Caco-2 (cell line): ENCODE measurements at regions of chr7 and their contacts with region 1.

Region 1: GRCh38 chr7:28530175-28530802 is 118.0 kb downstream of the CREB5 start:
- DNase-seq: peak in 1 of 2 experiments; percentile 69
- H3K4me3 ChIP-seq: no peak overlapping the region
- H3K4me3 Mint-ChIP-seq: peak overlapping the region; percentile 27
- H3K27ac Mint-ChIP-seq: no peak overlapping the region
- H3K4me1 ChIP-seq: peaks cover 19% of the 10 kb centered on the region
- H3K4me1 Mint-ChIP-seq: peaks cover 22% of the 10 kb centered on the region
- H3K27me3 ChIP-seq: no peaks in the 10 kb centered on the region
- H3K27me3 Mint-ChIP-seq: no peaks in the 10 kb centered on the region
- CTCF ChIP-seq: no peak

Region 2: GRCh38 chr7:28378574-28379149 is 151.6 kb before region 1 on chr7:
- CTCF ChIA-PET with region 1: no interaction called
- POLR2A ChIA-PET with region 1: no interaction called
- intact Hi-C with region 1: no loop called
- DNase-seq: no peak
- H3K4me3 ChIP-seq: no peak overlapping the region
- H3K4me3 Mint-ChIP-seq: no peak overlapping the region
- H3K27ac Mint-ChIP-seq: no peak overlapping the region
- H3K4me1 ChIP-seq: 0 out of 2 replicates have a peak, but pooled peaks cover 4% of the 10 kb centered on the region
- H3K4me1 Mint-ChIP-seq: no peaks in the 10 kb centered on the region
- H3K27me3 ChIP-seq: no peaks in the 10 kb centered on the region
- H3K27me3 Mint-ChIP-seq: peaks cover 3% of the 10 kb centered on the region
- CTCF ChIP-seq: no peak

Region 3: DNA sequence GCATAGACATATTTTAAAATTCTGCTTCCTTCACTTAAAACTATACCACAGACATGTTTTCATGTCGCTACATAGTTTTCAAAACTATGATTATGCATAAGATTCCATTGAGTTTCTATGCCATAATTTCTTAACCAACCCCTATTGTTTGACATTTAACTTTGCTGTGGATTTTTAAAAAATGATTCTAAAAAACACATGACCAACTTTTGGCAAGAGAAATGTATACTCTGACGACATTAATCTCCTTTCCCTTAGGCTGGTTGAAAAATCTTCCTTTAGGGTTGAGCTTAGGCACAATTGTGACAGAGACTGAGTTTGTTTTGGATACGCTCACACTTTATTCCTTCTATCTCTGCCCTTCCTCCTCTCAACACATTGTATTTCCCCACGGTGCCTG is 103.1 kb before region 1 on chr7:
- CTCF ChIA-PET with region 1: no interaction called
- POLR2A ChIA-PET with region 1: no interaction called
- intact Hi-C with region 1: no loop called
- DNase-seq: no peak
- H3K4me3 ChIP-seq: no peak overlapping the region
- H3K4me3 Mint-ChIP-seq: no peak overlapping the region
- H3K27ac Mint-ChIP-seq: no peak overlapping the region
- H3K4me1 ChIP-seq: peaks cover 14% of the 10 kb centered on the region
- H3K4me1 Mint-ChIP-seq: peaks cover 10% of the 10 kb centered on the region
- H3K27me3 ChIP-seq: no peaks in the 10 kb centered on the region
- H3K27me3 Mint-ChIP-seq: no peaks in the 10 kb centered on the region
- CTCF ChIP-seq: no peak

Region 4: DNA sequence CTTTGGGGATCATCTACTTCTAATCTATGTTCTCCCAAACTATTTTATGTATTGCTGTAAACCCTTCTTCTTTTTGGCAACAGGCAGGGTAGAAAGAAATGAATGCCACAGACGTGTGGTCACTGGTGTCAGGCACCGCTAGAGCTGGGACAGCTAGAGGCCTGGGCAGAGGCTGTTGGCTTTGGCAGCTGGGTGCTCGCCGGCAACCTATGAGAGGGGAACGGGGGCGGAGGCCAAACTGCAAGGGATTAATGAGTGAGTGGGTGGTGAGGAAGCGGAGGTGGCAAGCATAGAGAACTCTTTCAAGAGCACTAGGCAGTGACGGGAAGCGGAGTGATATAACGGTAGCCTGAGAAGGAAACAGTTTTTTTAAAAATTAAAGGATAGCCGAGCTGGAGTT is 39.5 kb before region 1 on chr7:
- CTCF ChIA-PET with region 1: no interaction called
- POLR2A ChIA-PET with region 1: no interaction called
- intact Hi-C with region 1: loop called (anchors 1 kb)
- DNase-seq: no peak
- H3K4me3 ChIP-seq: no peak overlapping the region
- H3K4me3 Mint-ChIP-seq: peak overlapping the region; percentile 6
- H3K27ac Mint-ChIP-seq: peak overlapping the region; percentile 68
- H3K4me1 ChIP-seq: peaks cover 29% of the 10 kb centered on the region
- H3K4me1 Mint-ChIP-seq: peaks cover 33% of the 10 kb centered on the region
- H3K27me3 ChIP-seq: no peaks in the 10 kb centered on the region
- H3K27me3 Mint-ChIP-seq: no peaks in the 10 kb centered on the region
- CTCF ChIP-seq: no peak